B cell (primary cell): ENCODE measurements at regions of chr11 and their contacts with region 1.

Region 1: DNA sequence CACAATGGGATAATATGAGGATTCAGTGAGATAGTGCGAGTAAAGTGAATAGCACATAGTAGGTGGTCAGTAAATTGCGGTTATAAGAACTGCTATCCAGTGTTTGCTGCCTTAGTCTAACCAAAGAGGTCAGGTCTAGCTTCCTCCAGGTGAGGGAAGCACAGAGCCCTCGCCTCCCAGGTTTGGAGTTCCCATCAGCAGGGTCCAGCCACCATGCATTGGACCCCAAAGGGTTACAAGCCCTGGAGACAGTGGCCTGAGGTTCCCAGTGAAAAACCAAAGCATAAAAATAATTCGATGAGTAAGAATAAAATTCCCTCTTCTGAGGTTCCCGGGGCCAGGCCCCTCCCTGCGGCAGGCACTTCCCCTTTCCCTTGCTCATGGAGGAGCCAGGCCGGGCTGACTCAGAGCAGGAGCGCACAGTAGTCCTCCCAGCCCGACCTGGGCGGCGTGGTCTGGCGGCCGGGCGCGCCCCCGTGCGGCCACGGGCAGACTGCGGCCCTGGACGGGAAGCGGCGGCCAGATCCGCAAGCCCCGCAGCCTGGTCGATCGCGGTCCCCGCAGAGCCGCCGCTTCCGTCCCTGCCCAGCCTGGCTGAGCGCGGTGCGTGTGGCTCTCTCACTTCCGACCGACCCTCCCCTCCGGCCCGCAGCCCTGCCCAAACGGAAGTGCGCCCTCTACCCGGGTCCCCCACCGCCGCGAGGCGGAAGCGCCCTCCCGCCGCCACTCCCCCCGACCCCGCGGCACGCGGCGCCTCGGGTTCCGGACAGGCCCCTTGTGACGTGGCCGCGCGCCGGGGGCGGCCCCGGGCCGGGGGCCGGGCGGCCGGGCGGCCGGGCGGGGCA is at the start of gene SLC39A13:
- DNase-seq: peak; percentile 98
- ATAC-seq: peak; percentile 81
- H3K4me3 ChIP-seq: peak within 1 kb of the TSS; percentile 60 to 94 (median 66)
- H3K4me3 Mint-ChIP-seq: peak within 1 kb of the TSS; percentile 92
- H3K27ac ChIP-seq: peak within 1 kb of the TSS; percentile 85 to 91
- H3K27ac Mint-ChIP-seq: peak within 1 kb of the TSS; percentile 95
- H3K4me1 ChIP-seq: peaks cover 16 to 25% of the 10 kb centered on the region in 2 donors
- H3K4me1 Mint-ChIP-seq: peaks cover 27% of the 10 kb centered on the region
- H3K27me3 ChIP-seq: no peaks in the 10 kb centered on the region
- H3K27me3 Mint-ChIP-seq: no peaks in the 10 kb centered on the region
- CTCF ChIP-seq: peak; percentile 92
- total RNA-seq, gene SLC39A13: 33.0 and 39.4 TPM in 2 replicates

Region 2: GRCh38 chr11:47233989-47234668 is 173.8 kb before region 1 on chr11:
- CTCF ChIA-PET with region 1: interaction called, 13 read pairs
- POLR2A ChIA-PET with region 1: no interaction called
- intact Hi-C with region 1: no loop called
- DNase-seq: no peak
- ATAC-seq: no peak
- H3K4me3 ChIP-seq: no peak overlapping the region
- H3K4me3 Mint-ChIP-seq: no peak overlapping the region
- H3K27ac ChIP-seq: no peak overlapping the region
- H3K27ac Mint-ChIP-seq: no peak overlapping the region
- H3K4me1 ChIP-seq: no peaks in the 10 kb centered on the region
- H3K4me1 Mint-ChIP-seq: no peaks in the 10 kb centered on the region
- H3K27me3 ChIP-seq: no peaks in the 10 kb centered on the region
- H3K27me3 Mint-ChIP-seq: no peaks in the 10 kb centered on the region
- CTCF ChIP-seq: no peak

Region 3: DNA sequence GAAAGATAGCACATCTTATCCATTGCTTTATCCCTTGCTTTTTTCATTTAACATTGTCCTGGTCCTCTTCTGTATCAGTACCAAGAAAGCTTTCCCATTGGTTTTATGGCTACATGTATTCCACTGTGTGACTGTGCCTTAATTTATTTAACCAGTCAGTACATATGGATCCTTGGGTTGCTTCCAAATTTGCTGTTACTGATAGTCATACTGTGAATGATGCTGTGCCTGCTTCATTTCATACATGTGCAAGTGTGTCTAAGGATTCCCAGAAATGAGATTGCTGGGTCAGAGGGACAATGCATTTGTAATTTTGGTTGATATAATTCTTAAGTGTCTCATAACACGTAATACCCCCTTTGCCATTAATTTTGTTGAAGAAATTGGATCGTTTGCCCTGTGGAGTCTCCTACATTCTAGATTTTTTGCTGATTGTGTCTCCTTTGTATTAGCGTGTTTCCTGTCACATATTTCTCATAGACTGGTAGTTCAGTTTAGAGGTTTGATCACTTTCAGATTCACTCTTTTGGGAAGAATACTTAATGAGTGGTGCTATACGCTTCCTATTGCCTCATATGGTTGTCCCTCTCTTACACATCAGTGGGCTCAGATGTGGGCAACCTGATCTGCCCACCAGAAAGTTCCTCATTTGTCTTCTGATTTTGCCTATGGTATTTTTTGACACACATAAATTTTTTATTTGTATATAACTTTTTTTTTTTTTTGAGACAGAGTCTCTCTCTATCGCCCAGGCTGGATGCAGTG is 90.7 kb before region 1 on chr11:
- CTCF ChIA-PET with region 1: interaction called, 19 read pairs
- POLR2A ChIA-PET with region 1: interaction called, 3 read pairs
- intact Hi-C with region 1: no loop called
- DNase-seq: peak; percentile 33
- ATAC-seq: no peak
- H3K4me3 ChIP-seq: no peak overlapping the region
- H3K4me3 Mint-ChIP-seq: no peak overlapping the region
- H3K27ac ChIP-seq: peak overlapping the region; percentile 16 to 27
- H3K27ac Mint-ChIP-seq: no peak overlapping the region
- H3K4me1 ChIP-seq: peaks cover 5 to 14% of the 10 kb centered on the region in 2 donors
- H3K4me1 Mint-ChIP-seq: peaks cover 12% of the 10 kb centered on the region
- H3K27me3 ChIP-seq: no peaks in the 10 kb centered on the region
- H3K27me3 Mint-ChIP-seq: no peaks in the 10 kb centered on the region
- CTCF ChIP-seq: no peak

Region 4: GRCh38 chr11:47394322-47395222 is 13.4 kb before region 1 on chr11:
- CTCF ChIA-PET with region 1: interaction called, 18 read pairs
- POLR2A ChIA-PET with region 1: interaction called, 9 read pairs
- intact Hi-C with region 1: loop called (anchors 1 kb)
- DNase-seq: peak; percentile 80
- ATAC-seq: peak; percentile 76
- H3K4me3 ChIP-seq: peak overlapping the region; percentile 2 to 55 (median 45)
- H3K4me3 Mint-ChIP-seq: peak overlapping the region; percentile 85
- H3K27ac ChIP-seq: peak overlapping the region; percentile 95 to 97
- H3K27ac Mint-ChIP-seq: peak overlapping the region; percentile 98
- H3K4me1 ChIP-seq: peaks cover 59 to 82% of the 10 kb centered on the region in 2 donors
- H3K4me1 Mint-ChIP-seq: peaks cover 70% of the 10 kb centered on the region
- H3K27me3 ChIP-seq: no peaks in the 10 kb centered on the region
- H3K27me3 Mint-ChIP-seq: no peaks in the 10 kb centered on the region
- CTCF ChIP-seq: no peak

Region 5: GRCh38 chr11:47552566-47553416 is 144.8 kb after region 1 on chr11 and contains the start of gene CELF1:
- CTCF ChIA-PET with region 1: no interaction called
- POLR2A ChIA-PET with region 1: no interaction called
- intact Hi-C with region 1: loop called (anchors 2 kb)
- DNase-seq: peak; percentile 96
- ATAC-seq: peak; percentile 95
- H3K4me3 ChIP-seq: peak within 1 kb of the TSS; percentile 65 to 94 (median 90)
- H3K4me3 Mint-ChIP-seq: peak within 1 kb of the TSS; percentile 99
- H3K27ac ChIP-seq: peak within 1 kb of the TSS; percentile 72 to 88
- H3K27ac Mint-ChIP-seq: peak within 1 kb of the TSS; percentile 93
- H3K4me1 ChIP-seq: peaks cover 31 to 32% of the 10 kb centered on the region in 2 donors
- H3K4me1 Mint-ChIP-seq: peaks cover 44% of the 10 kb centered on the region
- H3K27me3 ChIP-seq: no peaks in the 10 kb centered on the region
- H3K27me3 Mint-ChIP-seq: no peaks in the 10 kb centered on the region
- CTCF ChIP-seq: peak; percentile 96
- total RNA-seq, gene CELF1: 153 and 167 TPM in 2 replicates